ENCODE measurements at regions of chr15 and their contacts with region 1.

Region 1: GRCh38 chr15:55318588-55319494 is at the starts of genes PIGB and PIGBOS1:
- DNase-seq: peak; percentile 57 to 85 (median 72)
- ATAC-seq: peak; percentile 90 to 93 (median 91)
- H3K4me3 ChIP-seq: peak within 1 kb of the TSS; percentile 91 to 94
- H3K4me3 Mint-ChIP-seq: peak within 1 kb of the TSS; percentile 98 to 99 (median 98)
- H3K27ac ChIP-seq: peak within 1 kb of the TSS; percentile 98
- H3K27ac Mint-ChIP-seq: peak within 1 kb of the TSS; percentile 98 to 99
- H3K4me1 ChIP-seq: peaks cover 10 to 16% of the 10 kb centered on the region in 2 experiments
- H3K4me1 Mint-ChIP-seq: peaks cover 66 to 72% (median 72%) of the 10 kb centered on the region in 3 donors
- H3K27me3 ChIP-seq: no peaks in the 10 kb centered on the region
- H3K27me3 Mint-ChIP-seq: no peaks in the 10 kb centered on the region
- total RNA-seq, gene PIGB: 16.3 to 28.2 (median 20.1) TPM
- total RNA-seq, gene PIGBOS1: 10.0 to 24.4 (median 16.7) TPM

Region 2: DNA sequence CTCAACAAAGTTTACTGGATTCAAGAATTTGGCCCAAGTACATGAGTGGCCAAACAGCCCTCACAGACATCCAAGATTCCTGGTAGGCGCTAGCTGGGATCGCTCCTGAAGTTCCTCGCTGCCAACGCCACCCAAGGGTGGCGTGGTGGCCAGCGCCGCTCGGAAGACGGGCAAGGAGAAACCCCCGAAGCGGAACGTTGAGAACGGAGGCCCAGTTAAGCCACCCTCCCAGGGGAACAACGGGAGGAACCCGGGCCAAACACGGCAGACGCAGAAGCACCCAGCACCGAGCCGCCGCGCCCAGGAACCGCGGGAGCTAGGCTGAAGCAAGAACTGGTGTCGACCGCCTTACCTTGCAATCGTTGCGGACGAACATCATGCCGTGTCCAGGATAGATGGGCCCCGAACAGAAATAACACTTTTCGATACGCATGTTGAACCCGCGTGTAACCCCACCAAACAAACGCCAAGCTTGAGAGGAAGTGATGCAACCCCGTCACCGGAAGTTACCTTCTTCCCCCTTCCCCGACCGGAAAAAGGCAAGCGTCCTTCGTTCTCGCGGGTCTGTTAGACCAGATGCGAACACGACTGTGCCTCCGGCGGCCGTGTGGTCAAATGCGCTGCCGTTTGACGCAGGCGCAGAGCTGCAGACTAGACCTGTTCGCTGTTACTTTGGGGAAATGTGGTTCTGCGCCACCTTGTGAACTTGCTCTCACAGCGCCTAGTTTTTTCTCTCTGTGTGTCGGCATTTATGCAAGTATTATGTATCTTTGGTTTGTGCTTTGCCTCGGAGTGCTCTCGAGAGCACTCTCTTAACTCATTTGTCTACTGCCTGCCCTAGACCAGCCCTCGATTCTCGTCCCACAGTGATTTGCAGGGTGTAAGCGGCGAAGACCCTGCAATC is 122.1 kb before region 1 on chr15 and contains the start of gene RSL24D1:
- CTCF ChIA-PET with region 1: interaction called in 1 of 2 experiments, 9 read pairs
- POLR2A ChIA-PET with region 1: interaction called in 1 of 2 experiments, 10 read pairs
- DNase-seq: peak; percentile 88 to 99 (median 97)
- ATAC-seq: peak; percentile 97 to 98 (median 98)
- H3K4me3 ChIP-seq: peak within 1 kb of the TSS; percentile 60 to 99
- H3K4me3 Mint-ChIP-seq: no peak within 1 kb of the TSS
- H3K27ac ChIP-seq: peak within 1 kb of the TSS; percentile 78
- H3K27ac Mint-ChIP-seq: no peak within 1 kb of the TSS
- H3K4me1 ChIP-seq: peaks cover 6 to 39% of the 10 kb centered on the region in 2 experiments
- H3K4me1 Mint-ChIP-seq: peaks cover 0 to 28% (median 21%) of the 10 kb centered on the region in 3 donors
- H3K27me3 ChIP-seq: no peaks in the 10 kb centered on the region
- H3K27me3 Mint-ChIP-seq: no peaks in the 10 kb centered on the region
- total RNA-seq, gene RSL24D1: 88.9 to 133 (median 108) TPM